Common myeloid progenitor, CD34-positive (primary cell): ENCODE measurements at regions of chr9 and their contacts with region 1.

Region 1: DNA sequence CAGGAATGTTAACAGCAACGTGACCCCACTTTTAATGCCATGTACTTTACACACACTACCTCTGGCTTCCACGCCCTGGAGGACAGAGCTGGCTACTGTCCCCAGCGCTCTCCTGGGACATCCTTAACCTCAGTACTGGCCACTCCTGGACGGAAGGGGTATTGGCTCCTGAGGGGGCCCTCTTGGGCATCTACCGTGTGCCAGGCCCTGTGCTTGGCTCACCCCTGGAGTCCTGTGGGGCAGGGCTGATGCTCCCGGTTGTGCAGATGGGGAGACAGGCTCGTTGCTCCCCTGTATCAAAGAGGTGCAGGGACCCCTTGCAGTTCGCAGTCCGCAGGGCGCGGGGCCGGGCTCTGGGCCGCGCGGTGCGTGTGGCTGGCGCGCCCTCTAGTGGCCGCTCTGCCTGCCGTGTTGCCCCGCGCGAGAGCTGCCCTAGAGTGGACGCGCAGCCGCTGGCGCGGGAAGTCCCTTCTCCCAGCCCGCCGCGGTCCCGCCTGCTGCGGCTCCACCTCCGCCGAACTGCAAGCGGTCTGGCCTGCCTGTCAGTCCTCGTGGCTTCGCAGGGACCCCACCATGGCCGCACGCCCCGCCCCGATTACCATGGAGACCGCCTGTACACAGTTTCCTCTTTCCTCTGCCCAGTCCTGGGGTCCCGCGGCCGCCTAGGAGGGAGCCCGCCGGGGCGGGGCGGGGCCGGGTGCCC is at the start of gene WDR38:
- DNase-seq: peak; percentile 66 to 86 (median 85)
- H3K4me3 ChIP-seq: peak within 1 kb of the TSS; percentile 16 to 75 (median 51)
- H3K27ac ChIP-seq: no peak within 1 kb of the TSS
- H3K4me1 ChIP-seq: peaks cover 0 to 21% (median 17%) of the 10 kb centered on the region in 4 experiments
- H3K27me3 ChIP-seq: no peaks in the 10 kb centered on the region

Region 2: DNA sequence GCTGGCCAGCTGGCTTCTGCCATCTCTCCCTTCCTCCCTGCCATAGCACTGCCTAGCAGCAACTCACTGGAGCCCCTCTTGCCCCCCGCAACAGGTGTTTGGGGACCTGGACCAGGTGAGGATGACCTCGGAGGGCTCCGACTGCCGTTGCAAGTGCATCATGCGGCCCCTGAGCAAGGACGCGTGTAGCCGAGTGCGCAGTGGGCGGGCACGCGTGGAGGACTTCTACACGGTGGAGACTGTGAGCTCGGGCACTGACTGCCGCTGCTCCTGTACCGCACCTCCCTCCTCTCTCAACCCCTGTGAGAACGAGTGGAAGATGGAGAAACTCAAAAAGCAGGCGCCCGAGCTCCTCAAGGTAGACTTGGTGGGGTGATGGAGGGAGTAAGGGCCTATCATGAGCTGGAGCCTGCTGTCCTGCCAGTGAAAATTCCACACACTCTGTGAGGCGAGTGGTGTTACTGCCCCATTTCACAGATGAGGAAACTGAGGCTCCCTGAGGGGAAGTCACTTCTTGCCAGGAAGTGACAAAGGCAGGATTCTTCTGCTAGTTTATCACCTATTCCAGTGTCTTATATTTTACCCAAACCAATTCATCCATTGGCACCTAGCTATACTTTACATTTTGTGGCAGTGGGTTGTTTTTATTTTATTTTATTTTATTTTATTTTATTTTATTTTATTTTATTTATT is 66.0 kb before region 1 on chr9:
- CTCF ChIA-PET with region 1: interaction called, 59 read pairs
- POLR2A ChIA-PET with region 1: no interaction called
- DNase-seq: no peak
- H3K4me3 ChIP-seq: no peak overlapping the region
- H3K27ac ChIP-seq: no peak overlapping the region
- H3K4me1 ChIP-seq: peaks cover 0 to 7% (median 0%) of the 10 kb centered on the region in 4 experiments
- H3K27me3 ChIP-seq: no peaks in the 10 kb centered on the region

Region 3: GRCh38 chr9:124794902-124795491 is 58.0 kb before region 1 on chr9:
- CTCF ChIA-PET with region 1: interaction called, 59 read pairs
- POLR2A ChIA-PET with region 1: no interaction called
- DNase-seq: peak in 1 of 3 donors; percentile 23
- H3K4me3 ChIP-seq: no peak overlapping the region
- H3K27ac ChIP-seq: no peak overlapping the region
- H3K4me1 ChIP-seq: peaks cover 0 to 54% (median 33%) of the 10 kb centered on the region in 4 experiments
- H3K27me3 ChIP-seq: no peaks in the 10 kb centered on the region

Region 4: DNA sequence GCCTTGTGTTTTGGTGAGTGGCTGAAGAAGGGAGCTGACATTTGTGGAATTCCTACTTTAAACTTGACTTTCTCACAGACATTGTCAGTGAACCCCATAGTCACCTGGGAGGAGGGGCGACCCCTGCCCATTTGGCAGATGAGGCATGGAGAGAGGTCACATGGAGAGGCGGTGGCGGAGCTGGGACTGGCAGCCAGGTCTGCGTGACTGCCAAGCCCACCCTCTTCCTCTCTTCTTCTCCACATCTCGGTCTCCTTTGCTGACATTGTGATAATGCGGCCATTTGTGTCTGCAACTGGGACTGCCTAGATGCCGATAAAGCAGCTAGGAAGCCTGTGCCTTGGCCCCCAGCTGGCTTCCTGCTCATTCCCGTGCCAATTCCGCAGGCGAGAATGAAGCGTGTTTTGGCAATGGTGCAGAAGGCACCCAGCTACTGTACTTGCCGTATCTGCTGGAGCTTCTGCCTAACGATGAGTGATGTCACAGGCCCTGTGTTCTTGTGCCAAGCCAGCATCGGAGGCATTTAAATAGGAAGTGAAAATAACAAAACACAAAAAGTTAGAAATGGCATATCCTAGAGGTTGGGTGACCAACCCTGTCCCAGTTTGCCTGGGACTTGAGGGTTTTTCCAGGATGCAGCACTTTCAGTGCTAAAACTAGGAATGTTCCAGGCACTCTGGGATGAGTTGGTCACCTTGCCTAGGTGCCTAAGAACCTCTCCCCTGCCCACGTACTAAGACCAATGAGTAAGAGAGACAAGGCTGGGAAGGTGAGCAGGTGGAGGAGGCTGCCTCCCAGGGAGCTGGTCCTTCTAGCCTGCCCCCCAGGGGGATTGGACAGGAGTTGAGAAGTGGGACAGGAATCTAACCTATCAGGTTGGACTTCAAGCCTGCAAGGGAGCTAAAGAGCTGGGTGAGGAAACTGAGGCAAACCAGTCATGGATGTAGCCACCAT is 52.4 kb before region 1 on chr9:
- CTCF ChIA-PET with region 1: interaction called, 59 read pairs
- POLR2A ChIA-PET with region 1: no interaction called
- DNase-seq: peak; percentile 55 to 79 (median 64)
- H3K4me3 ChIP-seq: peak overlapping the region in 2 of 7 experiments; percentile 8 to 58
- H3K27ac ChIP-seq: no peak overlapping the region
- H3K4me1 ChIP-seq: peaks cover 0 to 51% (median 27%) of the 10 kb centered on the region in 4 experiments
- H3K27me3 ChIP-seq: no peaks in the 10 kb centered on the region

Region 5: GRCh38 chr9:124839612-124840299 is 13.2 kb before region 1 on chr9:
- CTCF ChIA-PET with region 1: interaction called, 213 read pairs
- POLR2A ChIA-PET with region 1: no interaction called
- DNase-seq: peak in 2 of 3 donors; percentile 43 to 52
- H3K4me3 ChIP-seq: no peak overlapping the region
- H3K27ac ChIP-seq: no peak overlapping the region
- H3K4me1 ChIP-seq: peaks cover 0 to 8% (median 8%) of the 10 kb centered on the region in 4 experiments
- H3K27me3 ChIP-seq: no peaks in the 10 kb centered on the region

Region 6: DNA sequence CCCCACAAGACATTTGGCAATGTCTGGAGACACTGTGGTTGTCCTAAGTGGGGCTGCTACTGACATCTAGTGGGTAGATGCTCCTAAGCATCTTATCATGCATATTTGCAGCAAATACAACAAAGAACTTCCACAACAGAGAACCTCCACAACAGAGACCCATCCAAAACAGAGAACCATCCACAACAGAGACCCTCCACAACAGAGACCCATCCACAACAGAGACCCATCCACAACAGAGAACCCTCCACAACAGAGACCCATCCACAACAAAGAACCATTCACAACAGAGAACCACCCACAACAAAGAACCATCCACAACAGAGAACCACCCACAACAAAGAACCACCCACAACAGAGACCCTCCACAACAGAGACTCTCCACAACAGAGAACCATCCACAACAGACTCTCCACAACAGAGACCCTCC is 41.8 kb after region 1 on chr9:
- CTCF ChIA-PET with region 1: interaction called, 18 read pairs
- POLR2A ChIA-PET with region 1: no interaction called
- DNase-seq: peak; percentile 75 to 88 (median 87)
- H3K4me3 ChIP-seq: no peak overlapping the region
- H3K27ac ChIP-seq: no peak overlapping the region
- H3K4me1 ChIP-seq: no peaks in the 10 kb centered on the region
- H3K27me3 ChIP-seq: no peaks in the 10 kb centered on the region

Region 7: GRCh38 chr9:125021069-125021468 is 168.1 kb after region 1 on chr9:
- CTCF ChIA-PET with region 1: no interaction called
- POLR2A ChIA-PET with region 1: no interaction called
- DNase-seq: no peak
- H3K4me3 ChIP-seq: no peak overlapping the region
- H3K27ac ChIP-seq: no peak overlapping the region
- H3K4me1 ChIP-seq: peaks cover 0 to 10% (median 2%) of the 10 kb centered on the region in 4 experiments
- H3K27me3 ChIP-seq: no peaks in the 10 kb centered on the region